Naive thymus-derived CD4-positive, alpha-beta T cell (primary cell): ENCODE measurements at regions of chr7 and their contacts with region 1.

Region 1: DNA sequence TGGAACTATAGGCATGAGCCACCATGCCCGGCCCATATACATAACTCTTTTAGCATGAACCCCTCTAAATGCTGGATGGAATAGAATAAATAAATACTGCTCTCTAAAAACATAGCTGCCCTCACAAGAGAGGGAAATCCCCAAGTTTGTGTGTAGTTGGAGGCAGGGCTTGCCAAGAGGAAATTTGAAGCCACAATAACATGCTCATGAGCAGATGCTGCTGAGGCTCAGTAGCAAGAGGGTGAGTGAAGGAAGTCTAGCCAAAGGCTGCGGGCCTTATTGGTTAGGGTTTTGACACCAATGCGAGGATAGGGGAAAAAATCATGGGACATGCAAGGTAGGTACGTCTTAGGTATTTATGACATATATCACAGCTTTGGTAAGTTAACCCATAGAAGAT is 17.3 kb downstream of the TPK1 start:
- DNase-seq: peak in 7 of 9 donors; percentile 64 to 83 (median 76)
- ATAC-seq: peak; percentile 97
- H3K4me3 ChIP-seq: no peak overlapping the region
- H3K4me3 Mint-ChIP-seq: peak overlapping the region; percentile 62 to 84 (median 72)
- H3K27ac ChIP-seq: peak overlapping the region; percentile 73
- H3K27ac Mint-ChIP-seq: peak overlapping the region; percentile 87 to 97 (median 93)
- H3K4me1 ChIP-seq: peaks cover 37 to 56% of the 10 kb centered on the region in 2 donors
- H3K4me1 Mint-ChIP-seq: peaks cover 35 to 95% (median 89%) of the 10 kb centered on the region in 7 donors
- H3K27me3 ChIP-seq: no peaks in the 10 kb centered on the region
- H3K27me3 Mint-ChIP-seq: no peaks in the 10 kb centered on the region

Region 2: GRCh38 chr7:144805627-144806239 is 12.8 kb before region 1 on chr7:
- CTCF ChIA-PET with region 1: interaction called, 3 read pairs
- POLR2A ChIA-PET with region 1: interaction called, 25 read pairs
- intact Hi-C with region 1: loop called in 1 of 2 experiments (anchors 2 kb)
- DNase-seq: no peak
- ATAC-seq: no peak
- H3K4me3 ChIP-seq: no peak overlapping the region
- H3K4me3 Mint-ChIP-seq: no peak overlapping the region
- H3K27ac ChIP-seq: no peak overlapping the region
- H3K27ac Mint-ChIP-seq: peak overlapping the region in 2 of 9 donors; percentile 12 to 21
- H3K4me1 ChIP-seq: peaks cover 0 to 23% of the 10 kb centered on the region in 2 donors
- H3K4me1 Mint-ChIP-seq: peaks cover 12 to 85% (median 75%) of the 10 kb centered on the region in 7 donors
- H3K27me3 ChIP-seq: no peaks in the 10 kb centered on the region
- H3K27me3 Mint-ChIP-seq: no peaks in the 10 kb centered on the region